Sigmoid colon (tissue), 7 donors: ENCODE measurements at regions of chr1 and their contacts with region 1.

Region 1: GRCh38 chr1:168178638-168179437 is at the start of gene TIPRL:
- DNase-seq: peak; percentile 98
- H3K4me3 ChIP-seq: peak within 1 kb of the TSS; percentile 76 to 84 (median 78)
- H3K27ac ChIP-seq: peak within 1 kb of the TSS; percentile 88 to 95 (median 92)
- H3K4me1 ChIP-seq: peaks cover 0 to 13% (median 10%) of the 10 kb centered on the region in 4 donors
- H3K27me3 ChIP-seq: no peaks in the 10 kb centered on the region
- CTCF ChIP-seq: peak; percentile 40 to 80 (median 74)
- EP300 ChIP-seq: peak in 1 of 4 donors; percentile 65
- POLR2A ChIP-seq: peak; percentile 62 to 75
- total RNA-seq, gene TIPRL: 24.0 to 31.0 (median 30.8) TPM

Region 2: GRCh38 chr1:168225476-168226190 is 46.8 kb after region 1 on chr1 and contains the start of gene SFT2D2:
- intact Hi-C with region 1: loop called (anchors 1 kb)
- DNase-seq: peak; percentile 88
- H3K4me3 ChIP-seq: peak within 1 kb of the TSS; percentile 75 to 95 (median 82)
- H3K27ac ChIP-seq: peak within 1 kb of the TSS; percentile 85 to 93 (median 90)
- H3K4me1 ChIP-seq: peaks cover 0 to 44% (median 40%) of the 10 kb centered on the region in 4 donors
- H3K27me3 ChIP-seq: no peaks in the 10 kb centered on the region
- CTCF ChIP-seq: no peak
- EP300 ChIP-seq: no peak
- POLR2A ChIP-seq: peak; percentile 41 to 58
- total RNA-seq, gene SFT2D2: 36.7 to 43.2 (median 39.2) TPM

Region 3: DNA sequence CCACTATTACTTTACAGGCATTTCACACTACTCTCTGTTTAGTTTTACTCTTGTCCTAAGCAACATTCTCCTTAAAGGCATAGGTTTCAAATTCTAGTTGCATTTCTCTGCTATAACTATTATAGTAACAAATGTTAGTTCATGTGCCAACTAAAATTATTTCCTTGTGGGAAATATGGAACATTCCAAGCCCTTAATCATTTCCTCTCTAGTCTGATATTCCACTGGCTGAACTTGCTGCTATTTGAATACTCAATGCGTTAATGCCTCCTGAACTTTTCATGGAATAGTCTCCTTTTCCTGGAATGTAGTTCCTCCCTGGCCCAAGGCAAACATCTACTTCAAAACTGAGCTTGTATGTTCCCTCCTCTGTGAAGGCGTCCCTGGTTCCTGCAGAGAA is 82.6 kb after region 1 on chr1:
- intact Hi-C with region 1: no loop called
- DNase-seq: no peak
- H3K4me3 ChIP-seq: no peak overlapping the region
- H3K27ac ChIP-seq: no peak overlapping the region
- H3K4me1 ChIP-seq: peaks cover 0 to 8% (median 3%) of the 10 kb centered on the region in 4 donors
- H3K27me3 ChIP-seq: no peaks in the 10 kb centered on the region
- CTCF ChIP-seq: no peak
- EP300 ChIP-seq: no peak
- POLR2A ChIP-seq: no peak